ENCODE measurements at regions of chr13 and their contacts with region 1.

Region 1: DNA sequence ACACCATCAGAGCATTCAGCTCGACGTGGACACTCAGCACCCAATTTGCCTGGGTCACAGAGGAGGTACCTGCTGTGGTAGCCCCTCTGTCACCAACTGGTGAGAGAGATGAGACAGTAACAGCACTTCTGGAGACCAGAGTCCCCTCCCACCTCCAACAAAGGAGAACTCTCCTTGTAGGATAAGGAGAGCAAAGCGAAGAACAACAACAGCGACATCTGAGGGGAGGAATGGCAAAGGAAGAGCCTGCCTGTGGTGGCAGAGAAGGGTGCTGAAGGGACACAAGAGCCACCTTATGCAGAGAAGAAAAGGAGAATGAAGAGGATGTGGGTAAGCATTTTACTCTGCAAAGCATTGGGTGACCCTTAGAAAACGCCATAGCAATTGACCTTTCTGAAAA is 167.8 kb downstream of the ABCC4 start:
- DNase-seq: no peak
- ATAC-seq: no peak
- H3K4me3 ChIP-seq: no peak overlapping the region
- H3K27ac ChIP-seq: no peak overlapping the region
- H3K4me1 ChIP-seq: no peaks in the 10 kb centered on the region
- H3K27me3 ChIP-seq: no peaks in the 10 kb centered on the region
- CTCF ChIP-seq: no peak
- EP300 ChIP-seq: no peak
- POLR2A ChIP-seq: no peak
- RAD21 ChIP-seq: no peak

Region 2: DNA sequence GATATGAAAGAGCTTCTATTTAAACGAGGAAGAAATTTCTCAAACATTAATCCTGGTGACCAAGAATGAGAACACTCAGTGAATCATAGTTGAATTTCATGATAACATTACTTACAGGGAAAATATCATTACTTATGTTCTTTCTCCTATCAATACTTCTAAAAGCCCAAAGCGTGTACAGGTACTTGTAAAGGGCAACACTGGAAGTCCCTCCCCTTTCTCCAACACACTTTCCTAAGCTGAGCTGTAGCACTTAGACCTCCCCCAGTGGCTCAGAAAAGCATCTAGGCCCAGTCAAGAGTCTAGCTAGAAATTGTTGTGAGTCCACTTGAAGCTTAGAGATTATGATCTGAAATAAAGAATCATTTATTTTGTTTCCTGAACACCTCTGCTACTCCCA is 17.1 kb after region 1 on chr13:
- CTCF ChIA-PET with region 1: interaction called, 4 read pairs
- POLR2A ChIA-PET with region 1: interaction called, 5 read pairs
- RAD21 ChIA-PET with region 1: no interaction called
- SMC1A ChIA-PET with region 1: interaction called, 10 read pairs
- in situ Hi-C with region 1: no loop called
- intact Hi-C with region 1: no loop called
- DNase-seq: no peak
- ATAC-seq: no peak
- H3K4me3 ChIP-seq: no peak overlapping the region
- H3K27ac ChIP-seq: no peak overlapping the region
- H3K4me1 ChIP-seq: no peaks in the 10 kb centered on the region
- H3K27me3 ChIP-seq: no peaks in the 10 kb centered on the region
- CTCF ChIP-seq: no peak
- EP300 ChIP-seq: no peak
- POLR2A ChIP-seq: no peak
- RAD21 ChIP-seq: no peak